Right ventricle myocardium inferior (tissue), 1 donor: ENCODE measurements at regions of chr18 and their contacts with region 1.

Region 1: GRCh38 chr18:22088029-22088428 is 81.4 kb upstream of the GATA6 start:
- DNase-seq: no peak
- ATAC-seq: peak; percentile 56

Region 2: GRCh38 chr18:21997207-21998143 is 90.6 kb before region 1 on chr18:
- intact Hi-C with region 1: loop called (anchors 2 kb)
- DNase-seq: no peak
- ATAC-seq: peak; percentile 63

Region 3: GRCh38 chr18:22163416-22164161 is 75.6 kb after region 1 on chr18:
- intact Hi-C with region 1: loop called (anchors 2 kb)
- DNase-seq: no peak
- ATAC-seq: no peak